Activated CD4-positive, alpha-beta memory T cell treated with anti-CD3 and anti-CD28 coated beads, Interleukin-2, amount 10 ng/mL, durations not matched to agents 7 days and 5 days (primary cell): ENCODE measurements at regions of chr17 and their contacts with region 1.

Region 1: DNA sequence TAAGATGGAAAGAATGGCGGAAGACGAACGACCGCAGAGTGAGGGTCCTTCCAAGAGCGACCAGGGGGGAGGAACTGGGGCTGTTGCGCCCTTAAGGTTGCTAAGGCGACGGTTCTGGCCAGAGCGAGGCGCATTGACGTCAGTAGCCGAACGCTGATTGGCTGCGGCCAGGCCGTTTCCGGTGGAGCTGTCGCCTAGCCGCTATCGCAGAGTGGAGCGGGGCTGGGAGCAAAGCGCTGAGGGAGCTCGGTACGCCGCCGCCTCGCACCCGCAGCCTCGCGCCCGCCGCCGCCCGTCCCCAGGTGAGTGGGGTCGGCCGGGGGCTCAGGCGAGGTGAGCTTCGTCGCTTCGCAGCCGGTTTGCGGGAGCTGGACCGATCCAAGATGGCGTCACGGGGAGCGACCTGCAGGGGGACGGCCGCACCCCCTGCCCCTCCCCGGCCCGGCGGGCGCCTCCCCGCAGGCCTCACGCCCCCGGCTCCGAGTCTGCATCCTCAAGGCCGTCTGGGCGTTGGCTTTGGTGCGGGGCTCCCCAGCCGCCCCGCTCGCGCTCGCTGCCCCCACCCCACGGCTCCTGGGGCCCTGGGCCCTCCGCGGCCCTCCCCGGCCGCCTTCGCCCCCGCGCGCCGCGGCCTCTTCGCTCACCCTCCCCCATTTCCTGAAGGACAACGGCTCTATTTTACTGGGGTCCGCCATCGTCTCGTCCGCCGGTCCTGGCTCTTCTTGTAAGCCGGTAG is at the start of gene PRKAR1A:
- DNase-seq: peak; percentile 94
- H3K4me3 Mint-ChIP-seq: peak within 1 kb of the TSS; percentile 98
- H3K27ac Mint-ChIP-seq: peak within 1 kb of the TSS; percentile 98
- H3K4me1 Mint-ChIP-seq: peaks cover 63% of the 10 kb centered on the region
- H3K27me3 Mint-ChIP-seq: no peaks in the 10 kb centered on the region
- total RNA-seq, gene PRKAR1A: 281 to 287 TPM

Region 2: GRCh38 chr17:68327823-68328570 is 184.4 kb before region 1 on chr17:
- CTCF ChIA-PET with region 1: no interaction called
- POLR2A ChIA-PET with region 1: no interaction called
- DNase-seq: no peak
- H3K4me3 Mint-ChIP-seq: no peak overlapping the region
- H3K27ac Mint-ChIP-seq: no peak overlapping the region
- H3K4me1 Mint-ChIP-seq: peaks cover 23% of the 10 kb centered on the region
- H3K27me3 Mint-ChIP-seq: no peaks in the 10 kb centered on the region

Region 3: GRCh38 chr17:68398691-68399637 is 113.5 kb before region 1 on chr17:
- CTCF ChIA-PET with region 1: no interaction called
- POLR2A ChIA-PET with region 1: no interaction called
- DNase-seq: peak; percentile 49
- H3K4me3 Mint-ChIP-seq: no peak overlapping the region
- H3K27ac Mint-ChIP-seq: peak overlapping the region; percentile 79
- H3K4me1 Mint-ChIP-seq: peaks cover 40% of the 10 kb centered on the region
- H3K27me3 Mint-ChIP-seq: no peaks in the 10 kb centered on the region

Region 4: DNA sequence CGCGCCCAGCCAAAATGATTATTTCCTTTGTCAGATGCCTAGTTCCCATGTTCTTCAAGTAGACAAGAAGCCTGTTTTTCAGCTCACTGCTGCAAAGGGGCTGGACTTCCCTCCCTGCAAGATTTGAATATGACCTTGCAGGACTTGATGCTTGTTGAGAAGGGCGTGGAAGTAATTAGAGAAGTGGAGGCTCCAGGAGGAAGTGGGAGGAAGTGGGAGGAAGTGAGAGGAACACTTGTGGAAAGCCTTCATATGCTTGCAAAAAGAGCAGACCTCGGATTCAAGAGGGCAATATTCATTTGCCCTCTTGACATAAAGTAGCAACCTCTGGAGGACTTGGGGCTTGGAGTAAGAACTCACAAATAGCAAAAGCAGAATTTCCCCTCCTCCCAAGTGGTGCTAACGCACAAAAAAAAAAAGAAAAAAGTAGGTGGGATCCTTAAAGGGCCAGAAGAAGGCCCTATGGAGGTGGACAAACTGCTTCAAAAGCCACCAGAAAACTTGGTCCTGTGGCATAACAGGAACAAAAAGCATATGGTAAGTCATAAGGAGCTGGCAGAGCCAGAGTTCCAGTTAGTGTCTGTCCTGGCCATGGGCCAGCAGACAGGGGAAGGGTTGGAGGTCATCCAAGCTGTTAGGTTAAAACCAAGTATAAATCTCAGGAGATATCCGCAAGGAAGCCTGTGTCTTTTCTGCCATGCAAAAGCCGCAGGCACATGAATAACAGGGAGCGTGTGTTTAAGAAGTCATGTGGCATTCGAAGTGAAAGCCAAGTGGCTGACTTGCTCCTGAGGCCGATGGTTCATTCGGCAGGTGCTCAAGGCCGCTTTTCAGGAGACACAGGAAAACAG is 20.8 kb before region 1 on chr17:
- CTCF ChIA-PET with region 1: interaction called, 12 read pairs
- POLR2A ChIA-PET with region 1: interaction called, 26 read pairs
- DNase-seq: no peak
- H3K4me3 Mint-ChIP-seq: no peak overlapping the region
- H3K27ac Mint-ChIP-seq: no peak overlapping the region
- H3K4me1 Mint-ChIP-seq: peaks cover 23% of the 10 kb centered on the region
- H3K27me3 Mint-ChIP-seq: peaks cover 11% of the 10 kb centered on the region

Region 5: DNA sequence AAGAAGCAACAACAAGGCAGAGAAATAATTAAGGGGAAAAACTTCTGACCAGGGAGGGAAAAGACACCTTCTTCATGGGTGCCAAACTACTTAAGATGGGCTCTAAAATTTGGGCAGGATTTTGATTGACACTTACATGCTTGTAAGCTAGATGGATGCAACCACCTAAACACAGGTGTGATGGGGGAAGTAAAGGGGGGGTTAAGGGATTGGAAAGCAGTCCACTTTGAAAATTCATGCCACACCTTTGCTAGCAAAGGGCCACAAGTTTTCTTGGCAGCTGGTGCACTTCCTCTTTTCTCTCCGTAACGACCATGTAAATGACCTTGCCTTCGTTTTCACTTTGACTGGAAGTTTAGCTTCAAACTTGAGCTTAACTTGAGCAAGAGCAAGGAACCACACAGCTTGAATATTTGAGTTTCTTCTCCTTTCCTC is 14.5 kb before region 1 on chr17:
- CTCF ChIA-PET with region 1: interaction called, 12 read pairs
- POLR2A ChIA-PET with region 1: interaction called, 26 read pairs
- DNase-seq: peak; percentile 27
- H3K4me3 Mint-ChIP-seq: peak overlapping the region; percentile 12
- H3K27ac Mint-ChIP-seq: peak overlapping the region; percentile 64
- H3K4me1 Mint-ChIP-seq: peaks cover 47% of the 10 kb centered on the region
- H3K27me3 Mint-ChIP-seq: peaks cover 6% of the 10 kb centered on the region

Region 6: GRCh38 chr17:68576811-68577496 is 64.5 kb after region 1 on chr17:
- CTCF ChIA-PET with region 1: no interaction called
- POLR2A ChIA-PET with region 1: no interaction called
- DNase-seq: no peak
- H3K4me3 Mint-ChIP-seq: no peak overlapping the region
- H3K27ac Mint-ChIP-seq: no peak overlapping the region
- H3K4me1 Mint-ChIP-seq: no peaks in the 10 kb centered on the region
- H3K27me3 Mint-ChIP-seq: peaks cover 2% of the 10 kb centered on the region